GM18951 (cell line): ENCODE measurements at regions of chr4 and their contacts with region 1.

Region 1: GRCh38 chr4:158729716-158730559 is 6.7 kb upstream of the PPID start:
- POLR2A ChIP-seq: no peak

Region 2: DNA sequence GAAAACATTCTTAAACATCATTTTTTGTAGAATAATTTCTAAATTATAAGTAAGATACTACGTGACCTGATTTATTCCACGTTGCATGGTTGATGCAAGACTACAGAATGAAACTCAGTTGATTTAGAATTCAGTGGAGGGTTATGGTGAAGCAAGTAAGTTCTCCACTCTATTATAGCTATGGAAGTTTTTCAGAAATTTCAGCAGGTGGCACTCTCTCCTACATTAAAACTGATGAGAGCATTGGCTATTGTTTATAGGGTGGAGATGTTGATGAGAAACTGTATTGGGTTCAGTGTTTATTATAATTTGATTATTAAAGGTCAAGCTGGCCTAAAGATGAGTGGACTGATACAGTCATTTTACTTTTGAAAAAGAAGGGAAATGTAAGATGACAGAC is 126.9 kb after region 1 on chr4:
- in situ Hi-C with region 1: loop called (anchors 10 kb)
- POLR2A ChIP-seq: no peak

Region 3: GRCh38 chr4:159175085-159175988 is 445.4 kb after region 1 on chr4:
- in situ Hi-C with region 1: loop called (anchors 25 kb)
- POLR2A ChIP-seq: no peak